Aorta (tissue), 5 donors: ENCODE measurements at regions of chr4 and their contacts with region 1.

Region 1: GRCh38 chr4:102826890-102827673 is at the start of gene UBE2D3:
- DNase-seq: peak; percentile 97
- ATAC-seq: peak; percentile 92
- H3K4me3 ChIP-seq: peak within 1 kb of the TSS; percentile 57 to 94
- H3K27ac ChIP-seq: peak within 1 kb of the TSS; percentile 90 to 97
- H3K4me1 ChIP-seq: peaks cover 0 to 8% of the 10 kb centered on the region in 2 donors
- H3K27me3 ChIP-seq: no peaks in the 10 kb centered on the region
- total RNA-seq, gene UBE2D3: 274 to 292 TPM

Region 2: DNA sequence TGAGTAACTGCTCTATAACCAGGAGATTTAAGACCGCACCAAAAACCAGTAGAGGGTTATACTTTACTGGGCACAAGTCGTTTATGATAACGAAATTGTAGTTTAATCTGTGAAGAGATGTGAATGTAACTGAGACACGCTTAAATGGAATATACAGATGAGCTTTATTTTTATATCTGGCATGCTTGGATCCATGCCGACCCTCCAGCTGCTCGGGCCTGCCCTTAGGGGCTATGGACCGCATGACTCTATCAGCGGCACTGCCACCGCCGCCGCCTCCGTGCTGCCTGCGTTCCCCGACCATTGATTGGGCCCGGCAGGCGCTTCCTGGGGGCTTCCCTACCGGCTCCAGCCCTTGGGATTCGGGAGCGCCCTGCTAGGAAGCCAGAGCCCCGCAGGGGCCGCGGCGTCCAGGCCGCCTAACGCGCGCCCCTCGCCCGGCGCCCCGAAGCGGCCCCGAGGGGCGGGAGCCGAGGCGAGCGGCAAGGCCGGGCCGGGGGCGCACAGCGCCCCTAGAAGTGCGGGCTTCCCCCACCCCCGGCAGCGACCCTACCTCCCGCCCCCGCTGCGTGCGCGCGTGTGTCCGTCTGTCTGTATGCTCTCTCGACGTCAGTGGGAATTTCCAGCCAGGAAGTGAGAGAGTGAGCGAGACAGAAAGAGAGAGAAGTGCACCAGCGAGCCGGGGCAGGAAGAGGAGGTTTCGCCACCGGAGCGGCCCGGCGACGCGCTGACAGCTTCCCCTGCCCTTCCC is 326.2 kb before region 1 on chr4 and contains the start of gene NFKB1:
- intact Hi-C with region 1: loop called in 1 of 2 experiments (anchors 5 kb)
- DNase-seq: peak; percentile 86
- ATAC-seq: peak; percentile 67
- H3K4me3 ChIP-seq: peak within 1 kb of the TSS; percentile 85 to 90
- H3K27ac ChIP-seq: peak within 1 kb of the TSS; percentile 88 to 97
- H3K4me1 ChIP-seq: peaks cover 3 to 6% of the 10 kb centered on the region in 2 donors
- H3K27me3 ChIP-seq: peaks cover 0 to 2% of the 10 kb centered on the region in 2 donors
- total RNA-seq, gene NFKB1: 39.8 to 48.4 TPM

Region 3: DNA sequence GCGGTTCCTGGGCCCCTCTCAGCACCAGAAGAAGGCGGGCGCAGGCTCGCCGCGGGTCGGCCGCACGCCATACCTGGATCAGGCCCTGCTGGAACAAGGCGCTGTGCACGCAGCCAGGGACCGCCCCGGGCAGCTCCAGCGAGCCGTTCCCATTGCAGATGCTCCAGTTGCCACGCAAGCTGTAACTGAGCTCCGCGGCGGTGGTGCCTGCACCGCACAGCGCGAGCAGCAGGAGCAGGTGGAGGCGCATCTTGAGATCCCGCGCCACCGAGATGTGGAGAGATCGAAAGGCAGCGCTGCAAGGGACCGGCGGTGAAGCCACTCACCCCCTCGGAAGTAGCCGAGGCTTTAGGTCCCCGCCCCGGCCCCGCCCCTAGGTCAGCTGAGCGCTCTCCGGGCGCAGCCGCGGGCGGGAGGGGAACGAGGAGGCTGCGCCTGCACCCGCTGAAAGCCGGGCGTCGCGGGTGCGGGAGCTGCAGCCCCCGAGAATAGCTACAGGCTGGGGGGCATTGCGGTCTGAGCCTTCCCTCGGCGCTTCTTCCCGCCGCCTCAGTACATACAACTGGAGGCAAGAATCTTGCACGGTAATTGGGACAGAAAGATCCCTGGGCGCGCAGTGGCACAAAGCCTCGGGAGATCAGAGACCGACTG is 66.3 kb before region 1 on chr4 and contains the start of gene MANBA:
- intact Hi-C with region 1: loop called in 1 of 2 experiments (anchors 5 kb)
- DNase-seq: peak; percentile 93 to 95
- ATAC-seq: peak; percentile 98
- H3K4me3 ChIP-seq: peak within 1 kb of the TSS; percentile 75 to 85
- H3K27ac ChIP-seq: peak within 1 kb of the TSS in 1 of 2 donors; percentile 35
- H3K4me1 ChIP-seq: no peaks in the 10 kb centered on the region
- H3K27me3 ChIP-seq: no peaks in the 10 kb centered on the region
- total RNA-seq, gene MANBA: 20.9 to 41.4 TPM

Region 4: GRCh38 chr4:103019308-103020124 is 192.4 kb after region 1 on chr4 and contains the start of gene SLC9B1:
- intact Hi-C with region 1: loop called in 1 of 2 experiments (anchors 10 kb)
- DNase-seq: peak; percentile 97 to 99
- ATAC-seq: peak; percentile 99
- H3K4me3 ChIP-seq: peak within 1 kb of the TSS; percentile 30 to 86
- H3K27ac ChIP-seq: peak within 1 kb of the TSS; percentile 84 to 98
- H3K4me1 ChIP-seq: no peaks in the 10 kb centered on the region
- H3K27me3 ChIP-seq: no peaks in the 10 kb centered on the region
- total RNA-seq, gene SLC9B1: 1.6 TPM

Region 5: GRCh38 chr4:103198111-103198765 is 371.2 kb after region 1 on chr4 and contains the start of gene CENPE:
- intact Hi-C with region 1: loop called in 1 of 2 experiments (anchors 5 kb)
- DNase-seq: peak; percentile 91 to 94
- ATAC-seq: peak; percentile 96
- H3K4me3 ChIP-seq: peak within 1 kb of the TSS; percentile 30 to 55
- H3K27ac ChIP-seq: no peak within 1 kb of the TSS
- H3K4me1 ChIP-seq: no peaks in the 10 kb centered on the region
- H3K27me3 ChIP-seq: no peaks in the 10 kb centered on the region
- total RNA-seq, gene CENPE: 1.3 to 3.4 TPM